HCT116 (cell line): ENCODE measurements at regions of chr1 and their contacts with region 1.

Region 1: DNA sequence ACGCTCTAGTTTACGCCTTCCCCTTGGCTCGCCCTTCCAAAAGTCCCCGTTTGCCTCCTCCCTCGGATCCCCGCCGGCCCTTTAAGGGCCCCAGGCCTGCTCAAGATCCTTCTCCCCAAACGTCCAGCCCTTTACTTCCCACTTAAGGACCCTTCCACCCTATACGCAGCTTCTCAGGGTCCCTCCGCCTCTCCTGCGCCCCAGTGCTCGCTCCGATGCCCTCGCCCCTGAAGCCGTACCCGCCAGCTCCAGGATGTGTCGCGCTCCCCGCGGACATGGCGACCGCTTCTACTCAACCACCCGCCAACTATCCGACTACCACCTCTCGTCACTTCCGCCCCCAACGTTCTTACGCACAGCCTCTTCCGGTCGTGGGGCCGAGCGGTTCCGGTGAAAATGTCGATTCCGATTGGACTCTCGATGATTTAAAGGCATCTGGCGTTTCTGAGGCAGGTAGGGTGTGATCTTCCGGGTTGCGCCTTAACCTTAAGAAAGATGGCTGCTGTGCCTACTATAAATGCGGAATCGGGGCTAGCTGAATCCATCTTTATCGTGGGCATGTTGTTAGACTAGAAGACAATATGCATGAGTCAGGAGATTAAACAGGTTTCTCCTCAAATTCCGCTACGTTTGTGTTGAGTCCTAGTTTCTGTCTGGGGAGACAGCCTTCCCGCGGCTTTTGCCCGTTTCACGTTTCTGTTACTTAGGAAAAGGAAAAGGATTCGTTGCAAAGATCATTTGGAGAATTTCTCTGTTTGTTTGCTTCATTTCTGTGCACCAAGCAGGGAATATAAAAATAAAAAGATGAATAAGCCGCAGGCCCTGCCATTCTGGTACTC is at the start of gene KHDC4:
- DNase-seq: peak; percentile 98
- ATAC-seq: peak; percentile 89
- H3K4me3 ChIP-seq: peak within 1 kb of the TSS; percentile 99
- H3K27ac ChIP-seq: peak within 1 kb of the TSS; percentile 67
- H3K4me1 ChIP-seq: peaks cover 23 to 42% of the 10 kb centered on the region in 2 experiments
- H3K27me3 ChIP-seq: no peaks in the 10 kb centered on the region
- CTCF ChIP-seq: 0 out of 6 replicates have a peak, but pooled peaks of 1 of the 3 experiments have one; percentile 6
- POLR2A ChIP-seq: peak; percentile 81
- RAD21 ChIP-seq: no peak
- total RNA-seq, gene KHDC4: 60.7 TPM

Region 2: GRCh38 chr1:155911156-155912055 is 22.9 kb before region 1 on chr1 and contains the start of gene RIT1:
- CTCF ChIA-PET with region 1: no interaction called
- POLR2A ChIA-PET with region 1: no interaction called
- RAD21 ChIA-PET with region 1: no interaction called
- intact Hi-C with region 1: loop called (anchors 2 kb)
- DNase-seq: no peak
- ATAC-seq: peak; percentile 57
- H3K4me3 ChIP-seq: no peak within 1 kb of the TSS
- H3K27ac ChIP-seq: no peak within 1 kb of the TSS; the same call in 1 of the 2 replicates
- H3K4me1 ChIP-seq: peaks cover 0 to 23% of the 10 kb centered on the region in 2 experiments; a peak in 2 of 4 replicates
- H3K27me3 ChIP-seq: no peaks in the 10 kb centered on the region
- CTCF ChIP-seq: no peak
- POLR2A ChIP-seq: no peak
- RAD21 ChIP-seq: no peak
- total RNA-seq, gene RIT1: 10.2 TPM

Region 3: GRCh38 chr1:155989242-155990004 is 55.1 kb after region 1 on chr1:
- CTCF ChIA-PET with region 1: interaction called, 35 read pairs
- POLR2A ChIA-PET with region 1: interaction called, 20 read pairs
- RAD21 ChIA-PET with region 1: interaction called, 7 to 18 read pairs
- intact Hi-C with region 1: loop called (anchors 1 kb)
- DNase-seq: no peak
- ATAC-seq: peak; percentile 95
- H3K4me3 ChIP-seq: no peak overlapping the region
- H3K27ac ChIP-seq: peak overlapping the region; percentile 10; the same call in 1 of the 2 replicates
- H3K4me1 ChIP-seq: peaks cover 0 to 5% of the 10 kb centered on the region in 2 experiments; a peak in 2 of 4 replicates
- H3K27me3 ChIP-seq: no peaks in the 10 kb centered on the region
- CTCF ChIP-seq: peak; percentile 90 to 98 (median 97)
- POLR2A ChIP-seq: no peak
- RAD21 ChIP-seq: peak; percentile 96